ENCODE measurements at regions of chr19 and their contacts with region 1.

Region 1: DNA sequence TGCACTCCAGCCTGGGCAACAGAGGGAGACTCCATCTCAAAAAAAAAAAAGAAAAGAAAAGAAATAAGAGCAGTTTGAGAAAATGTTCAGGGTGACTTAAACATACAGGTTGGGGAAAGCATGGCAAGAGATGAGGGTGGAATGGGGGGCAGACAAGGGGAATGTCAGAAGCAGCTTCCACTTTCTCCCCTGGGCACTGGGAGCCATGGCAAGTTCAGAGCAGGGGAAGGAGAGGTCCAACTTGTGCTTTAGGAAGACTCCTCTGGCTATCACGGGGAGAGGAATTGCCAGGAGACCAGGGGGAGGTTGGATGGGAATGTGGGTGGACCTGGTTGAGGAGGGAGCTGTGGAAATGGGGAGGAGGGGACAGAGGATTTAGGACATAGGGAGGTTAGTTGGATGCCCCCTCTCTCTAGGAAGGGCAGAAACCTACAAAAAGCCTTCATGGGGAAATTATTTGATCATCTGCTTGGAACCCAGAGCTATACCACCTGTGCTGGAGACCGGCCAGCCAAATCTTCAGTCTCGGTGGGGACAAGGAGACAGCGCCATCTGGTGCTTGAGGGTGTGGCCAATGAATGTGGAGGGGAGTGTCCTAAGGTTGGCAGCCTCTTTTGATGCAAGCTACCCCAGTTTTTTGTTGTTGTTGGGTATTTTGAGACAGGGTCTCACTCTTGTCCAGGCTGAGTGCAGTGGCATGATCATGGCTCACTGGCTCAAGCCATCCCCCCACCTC is 7.3 kb upstream of the STRN4 start:
- DNase-seq: peak; percentile 85
- ATAC-seq: peak; percentile 84
- H3K4me3 Mint-ChIP-seq: no peak overlapping the region
- H3K27ac Mint-ChIP-seq: no peak overlapping the region
- H3K4me1 Mint-ChIP-seq: peaks cover 26% of the 10 kb centered on the region
- H3K27me3 Mint-ChIP-seq: no peaks in the 10 kb centered on the region

Region 2: DNA sequence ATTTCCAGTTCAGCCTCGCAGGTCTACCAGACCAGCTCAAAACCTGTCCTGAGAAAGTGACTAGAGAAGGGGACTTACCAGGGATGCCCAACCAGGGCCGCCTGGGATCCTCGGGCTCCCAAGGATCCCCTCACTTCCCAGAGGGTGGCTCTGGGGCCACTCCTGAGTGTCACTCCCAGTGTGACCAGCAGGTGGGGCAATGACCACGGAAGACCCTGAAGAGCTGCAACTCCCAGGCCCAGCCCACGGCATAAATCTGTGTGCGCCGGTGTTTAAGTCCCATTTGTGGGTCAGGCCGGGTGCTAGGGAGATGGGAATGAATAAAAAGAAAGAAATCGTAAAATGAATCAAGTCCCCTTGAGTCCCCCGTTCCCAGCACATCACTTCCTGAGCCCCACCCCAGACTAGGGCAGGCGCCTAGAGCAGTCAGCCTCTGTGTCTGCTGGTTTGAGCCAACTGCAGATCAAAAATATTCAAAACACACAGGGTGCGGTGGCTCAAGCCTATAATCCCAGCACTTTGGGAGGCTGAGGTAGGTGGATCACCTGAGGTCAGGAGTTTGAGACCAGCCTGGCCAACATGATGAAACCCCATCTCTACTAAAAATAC is 139.4 kb before region 1 on chr19:
- CTCF ChIA-PET with region 1: interaction called, 12 read pairs
- DNase-seq: peak; percentile 87
- ATAC-seq: peak; percentile 73
- H3K4me3 Mint-ChIP-seq: no peak overlapping the region
- H3K27ac Mint-ChIP-seq: peak overlapping the region; percentile 22
- H3K4me1 Mint-ChIP-seq: peaks cover 63% of the 10 kb centered on the region
- H3K27me3 Mint-ChIP-seq: no peaks in the 10 kb centered on the region

Region 3: GRCh38 chr19:46704379-46705076 is 49.1 kb before region 1 on chr19:
- CTCF ChIA-PET with region 1: interaction called, 23 read pairs
- DNase-seq: peak; percentile 90
- ATAC-seq: peak; percentile 88
- H3K4me3 Mint-ChIP-seq: no peak overlapping the region
- H3K27ac Mint-ChIP-seq: peak overlapping the region; percentile 67
- H3K4me1 Mint-ChIP-seq: peaks cover 6% of the 10 kb centered on the region
- H3K27me3 Mint-ChIP-seq: no peaks in the 10 kb centered on the region

Region 4: GRCh38 chr19:46741447-46741846 is 12.1 kb before region 1 on chr19:
- CTCF ChIA-PET with region 1: interaction called, 19 read pairs
- DNase-seq: no peak
- ATAC-seq: no peak
- H3K4me3 Mint-ChIP-seq: no peak overlapping the region
- H3K27ac Mint-ChIP-seq: no peak overlapping the region
- H3K4me1 Mint-ChIP-seq: peaks cover 38% of the 10 kb centered on the region
- H3K27me3 Mint-ChIP-seq: no peaks in the 10 kb centered on the region

Region 5: DNA sequence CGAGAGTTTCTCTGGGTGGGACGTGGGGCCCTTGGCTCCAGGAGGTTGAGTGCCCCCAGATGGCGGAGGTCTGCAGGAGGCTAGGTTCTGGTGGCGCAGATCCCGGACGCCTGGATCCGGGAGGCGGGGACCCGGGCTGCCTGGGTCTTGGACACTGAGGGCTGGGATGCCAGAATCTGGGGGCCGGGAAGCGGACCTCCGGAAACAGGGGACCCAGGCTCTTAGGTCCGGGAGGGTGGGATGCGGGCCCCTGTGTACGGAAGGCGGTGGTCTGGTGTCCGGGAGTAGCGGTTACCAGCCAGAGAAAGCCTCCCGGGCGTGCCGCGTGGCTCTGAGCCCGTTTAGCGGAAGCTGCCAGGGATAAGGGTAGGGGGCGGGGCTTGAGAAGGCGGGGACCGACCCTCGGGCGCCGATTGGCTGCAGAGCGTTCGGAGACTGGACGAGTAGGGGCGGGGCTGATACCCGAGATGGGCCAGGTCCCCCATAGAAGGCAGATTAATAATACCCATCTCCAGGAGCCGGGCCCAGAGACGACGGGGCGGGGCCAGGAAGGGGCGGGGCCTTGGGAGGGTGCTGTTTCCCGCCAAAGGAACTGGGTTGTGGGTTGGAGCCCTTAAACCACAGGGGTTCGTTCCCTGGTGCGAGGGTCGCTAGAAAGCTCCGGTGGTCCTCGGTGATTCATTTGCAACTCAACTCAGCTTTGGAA is 34.8 kb after region 1 on chr19 and contains the start of gene SLC1A5:
- CTCF ChIA-PET with region 1: interaction called, 29 read pairs
- DNase-seq: peak; percentile 99
- ATAC-seq: peak; percentile 72
- H3K4me3 Mint-ChIP-seq: peak within 1 kb of the TSS; percentile 90
- H3K27ac Mint-ChIP-seq: peak within 1 kb of the TSS; percentile 97
- H3K4me1 Mint-ChIP-seq: peaks cover 49% of the 10 kb centered on the region
- H3K27me3 Mint-ChIP-seq: no peaks in the 10 kb centered on the region
- total RNA-seq, gene SLC1A5: 196 to 259 TPM

Region 6: DNA sequence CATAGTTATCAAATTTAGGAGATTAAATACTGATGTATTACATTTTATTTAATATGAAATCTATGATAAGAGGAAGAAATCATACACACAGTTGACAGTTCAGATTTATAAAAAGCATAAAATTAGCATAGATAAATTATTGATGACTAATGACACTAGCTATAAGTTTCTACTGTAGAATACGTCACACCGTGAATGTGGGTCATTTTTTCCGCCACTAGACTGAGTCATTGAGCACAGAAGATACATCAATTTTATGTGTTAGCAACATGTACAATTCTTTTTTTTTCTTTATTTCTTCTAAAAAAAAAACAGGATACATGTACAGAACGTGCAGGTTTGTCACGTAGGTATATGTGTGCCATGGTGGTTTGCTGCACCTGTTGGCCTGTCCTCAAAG is 74.9 kb after region 1 on chr19:
- CTCF ChIA-PET with region 1: interaction called, 203 read pairs
- DNase-seq: peak; percentile 55
- ATAC-seq: no peak
- H3K4me3 Mint-ChIP-seq: no peak overlapping the region
- H3K27ac Mint-ChIP-seq: no peak overlapping the region
- H3K4me1 Mint-ChIP-seq: peaks cover 23% of the 10 kb centered on the region
- H3K27me3 Mint-ChIP-seq: no peaks in the 10 kb centered on the region

Measured in activated CD8-positive, alpha-beta memory T cell treated with anti-CD3 and anti-CD28 coated beads, Interleukin-2, amount 10 ng/mL, durations not matched to agents 7 days and 5 days (primary cell).